ENCODE measurements at regions of chr11 and their contacts with region 1.

Region 1: GRCh38 chr11:2885676-2886081 is at the start of gene CDKN1C:
- DNase-seq: peak; percentile 90
- ATAC-seq: peak; percentile 91
- H3K4me3 ChIP-seq: peak within 1 kb of the TSS; percentile 39 to 93 (median 70)
- H3K4me3 Mint-ChIP-seq: peak within 1 kb of the TSS; percentile 95
- H3K27ac ChIP-seq: no peak within 1 kb of the TSS
- H3K27ac Mint-ChIP-seq: peak within 1 kb of the TSS; percentile 56
- H3K4me1 ChIP-seq: peaks cover 9 to 20% of the 10 kb centered on the region in 2 donors
- H3K4me1 Mint-ChIP-seq: peaks cover 16% of the 10 kb centered on the region
- H3K27me3 ChIP-seq: peaks cover 0 to 34% (median 7%) of the 10 kb centered on the region in 4 experiments
- H3K27me3 Mint-ChIP-seq: peaks cover 15% of the 10 kb centered on the region
- CTCF ChIP-seq: no peak
- total RNA-seq, gene CDKN1C: 5.9 and 8.0 TPM in 2 replicates

Region 2: DNA sequence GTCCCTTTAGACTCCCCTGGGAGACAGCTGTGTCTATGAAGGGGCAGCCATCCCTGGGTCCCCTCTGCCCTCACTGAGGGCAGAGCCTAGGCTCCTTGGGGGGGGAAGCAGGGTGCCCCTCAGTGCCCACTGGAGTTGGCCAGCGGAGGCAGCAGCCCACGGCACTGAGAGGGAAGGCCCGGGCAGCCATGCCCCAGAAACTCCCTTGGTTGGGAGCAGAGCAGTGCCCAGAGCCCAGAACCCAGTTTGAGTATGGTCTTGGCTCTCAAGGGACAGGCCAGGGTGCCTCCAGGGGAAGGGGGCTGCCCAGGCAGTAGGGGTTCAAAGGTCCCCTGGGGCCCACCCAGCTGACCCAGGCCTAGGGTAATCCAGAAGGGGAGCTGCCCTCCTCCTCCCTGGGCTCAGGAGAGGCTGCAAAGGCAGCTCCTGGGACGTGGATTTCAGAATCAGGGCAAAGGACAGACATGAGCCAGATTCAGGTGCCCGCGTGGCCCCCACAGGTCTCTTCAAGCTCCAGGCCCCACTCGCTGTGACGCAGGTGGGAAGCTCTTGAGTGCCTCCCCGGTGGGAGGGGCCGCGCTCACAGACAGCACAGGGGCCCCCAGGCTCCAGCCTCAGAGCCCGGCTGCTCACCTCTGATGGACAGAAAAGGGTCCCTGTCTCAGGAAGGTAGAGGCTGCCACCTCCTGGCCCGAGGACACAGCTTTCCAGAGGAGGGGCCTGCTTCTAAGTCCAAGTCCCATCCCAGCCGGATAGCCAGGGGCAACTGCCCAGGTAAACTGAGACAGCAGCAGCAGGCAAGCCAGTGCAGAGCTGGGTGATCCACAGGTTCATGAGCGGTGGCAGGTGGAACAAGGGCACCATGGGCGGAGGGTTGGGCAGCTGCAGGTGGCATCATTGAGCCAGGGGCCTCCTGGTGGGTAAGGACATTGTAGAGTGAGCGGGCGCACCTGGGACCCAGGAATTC is 586.6 kb before region 1 on chr11:
- CTCF ChIA-PET with region 1: interaction called, 6 read pairs
- POLR2A ChIA-PET with region 1: no interaction called
- intact Hi-C with region 1: loop called (anchors 5 kb)
- DNase-seq: peak; percentile 52
- ATAC-seq: no peak
- H3K4me3 ChIP-seq: peak overlapping the region in 2 of 5 experiments; percentile 21 to 44
- H3K4me3 Mint-ChIP-seq: peak overlapping the region; percentile 50
- H3K27ac ChIP-seq: peak overlapping the region in 1 of 2 donors; percentile 37
- H3K27ac Mint-ChIP-seq: peak overlapping the region; percentile 88
- H3K4me1 ChIP-seq: peaks cover 51 to 57% of the 10 kb centered on the region in 2 donors
- H3K4me1 Mint-ChIP-seq: peaks cover 58% of the 10 kb centered on the region
- H3K27me3 ChIP-seq: no peaks in the 10 kb centered on the region
- H3K27me3 Mint-ChIP-seq: no peaks in the 10 kb centered on the region
- CTCF ChIP-seq: no peak

Region 3: DNA sequence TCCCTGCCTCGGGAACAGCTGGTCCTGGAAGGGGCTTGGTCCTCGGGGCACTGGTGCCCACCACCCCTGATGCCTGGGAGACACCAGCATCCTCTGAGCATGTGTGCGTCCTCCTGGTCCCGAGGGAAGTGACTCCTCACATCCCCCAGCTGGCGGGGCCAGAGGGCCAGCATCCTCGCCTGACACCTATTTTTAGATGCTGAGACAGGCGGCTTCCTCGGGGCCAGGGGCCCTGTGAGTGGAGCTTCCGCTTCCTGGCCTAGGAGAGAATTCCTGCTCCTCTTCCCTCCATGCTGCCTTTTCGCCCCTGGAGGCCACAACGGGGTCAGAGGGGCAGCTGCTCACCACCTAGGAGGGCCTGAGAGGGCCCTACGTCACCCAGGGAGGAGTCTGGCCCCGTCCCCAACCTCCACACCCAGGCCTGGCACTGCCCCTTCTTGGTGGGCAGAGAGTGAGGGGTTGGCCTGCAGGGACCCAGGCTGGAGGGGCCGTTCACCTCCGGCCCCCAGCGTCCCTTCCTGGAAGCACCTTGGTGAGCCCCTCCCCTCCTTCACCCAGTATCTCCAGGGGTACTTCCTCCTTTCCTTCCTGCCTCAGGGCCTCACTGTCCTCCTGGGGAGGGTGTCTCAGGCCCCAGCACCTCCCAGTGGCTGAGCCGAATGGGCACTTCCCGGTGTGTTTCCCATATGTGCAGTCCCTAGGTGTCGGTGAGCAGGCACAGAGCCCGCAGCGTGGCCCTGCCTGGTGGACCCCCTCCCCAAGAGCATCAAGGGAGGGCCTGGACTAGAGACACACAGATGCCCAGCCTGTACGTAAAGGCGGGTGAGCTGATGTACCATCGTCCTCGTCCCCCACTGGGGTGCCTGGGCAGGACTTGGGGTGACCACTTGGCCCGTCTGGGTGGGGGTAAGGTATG is 502.5 kb before region 1 on chr11:
- CTCF ChIA-PET with region 1: no interaction called
- POLR2A ChIA-PET with region 1: no interaction called
- intact Hi-C with region 1: loop called (anchors 5 kb)
- DNase-seq: peak; percentile 65
- ATAC-seq: no peak
- H3K4me3 ChIP-seq: peak overlapping the region in 2 of 5 experiments; percentile 5 to 7
- H3K4me3 Mint-ChIP-seq: peak overlapping the region; percentile 80
- H3K27ac ChIP-seq: peak overlapping the region; percentile 83 to 86
- H3K27ac Mint-ChIP-seq: peak overlapping the region; percentile 94
- H3K4me1 ChIP-seq: peaks cover 89 to 97% of the 10 kb centered on the region in 2 donors
- H3K4me1 Mint-ChIP-seq: peaks cover 89% of the 10 kb centered on the region
- H3K27me3 ChIP-seq: no peaks in the 10 kb centered on the region
- H3K27me3 Mint-ChIP-seq: no peaks in the 10 kb centered on the region
- CTCF ChIP-seq: no peak

Region 4: DNA sequence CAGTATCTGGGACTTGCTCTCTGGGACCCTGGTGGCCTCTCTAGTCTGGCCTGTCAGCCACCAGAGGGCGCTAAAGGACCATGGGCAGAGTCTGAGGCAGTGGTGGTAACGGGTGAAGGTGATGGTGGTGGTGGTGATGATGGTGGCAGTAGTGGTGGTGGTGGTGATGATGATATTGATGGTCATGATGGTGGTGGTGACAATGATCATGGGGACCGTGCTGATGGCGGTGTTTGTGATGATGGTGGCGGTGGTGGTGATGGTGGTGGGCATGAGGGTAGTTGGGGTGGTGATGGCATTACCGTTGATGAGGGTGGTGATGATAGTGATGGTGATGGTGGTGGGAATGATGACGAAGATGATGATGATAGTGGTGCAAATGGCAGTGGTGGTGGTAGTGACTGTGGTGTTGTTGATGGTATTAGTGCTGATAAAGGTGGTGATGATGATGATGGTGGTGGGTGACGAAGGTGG is 457.3 kb before region 1 on chr11:
- CTCF ChIA-PET with region 1: interaction called, 10 read pairs
- POLR2A ChIA-PET with region 1: no interaction called
- intact Hi-C with region 1: loop called (anchors 1 kb)
- DNase-seq: peak; percentile 85
- ATAC-seq: peak; percentile 94
- H3K4me3 ChIP-seq: no peak overlapping the region
- H3K4me3 Mint-ChIP-seq: no peak overlapping the region
- H3K27ac ChIP-seq: no peak overlapping the region
- H3K27ac Mint-ChIP-seq: no peak overlapping the region
- H3K4me1 ChIP-seq: no peaks in the 10 kb centered on the region
- H3K4me1 Mint-ChIP-seq: no peaks in the 10 kb centered on the region
- H3K27me3 ChIP-seq: no peaks in the 10 kb centered on the region
- H3K27me3 Mint-ChIP-seq: no peaks in the 10 kb centered on the region
- CTCF ChIP-seq: peak; percentile 82

Region 5: DNA sequence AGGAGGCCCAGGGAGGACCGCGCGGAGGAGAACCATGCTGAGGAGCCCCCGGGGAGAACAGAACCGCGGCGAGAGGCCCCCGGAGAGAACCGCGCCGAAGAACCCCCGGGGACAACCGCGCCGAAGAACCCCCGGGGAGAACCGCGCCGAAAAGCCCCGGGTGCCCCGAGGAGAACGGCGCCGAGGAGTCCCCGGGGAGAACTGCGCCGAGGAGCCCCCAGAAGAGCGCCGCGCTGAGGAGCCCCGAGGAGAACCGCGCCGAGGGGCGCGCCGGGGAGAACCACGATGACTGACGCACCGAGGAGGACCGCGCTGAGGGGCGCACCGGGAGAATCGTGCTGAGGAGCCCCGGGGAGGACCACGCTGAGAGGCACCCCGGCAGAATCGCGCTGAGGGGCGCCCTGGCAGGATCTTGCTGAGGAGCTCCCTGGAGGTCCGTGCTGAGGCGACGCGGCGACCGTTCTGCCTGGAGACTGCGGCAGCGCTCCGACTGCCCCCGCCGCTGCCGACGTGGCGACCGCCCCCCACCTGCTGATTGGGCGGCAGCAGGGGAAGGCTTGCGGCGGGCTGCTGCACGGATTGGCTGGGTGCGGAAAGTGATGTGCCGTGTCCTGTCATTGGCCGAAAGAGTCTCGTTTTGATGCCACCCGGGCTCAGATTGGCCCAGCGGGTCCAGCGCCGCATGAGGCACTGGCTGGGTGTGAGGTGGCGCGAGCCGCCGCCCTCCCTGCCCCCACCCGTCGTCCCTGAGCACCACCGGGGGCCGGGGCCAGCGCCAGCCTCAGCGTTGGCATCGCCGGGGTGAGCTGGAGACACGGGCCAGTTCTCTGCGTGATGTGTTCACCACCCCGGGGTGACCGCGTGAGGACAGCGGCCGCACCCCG is 185.9 kb before region 1 on chr11 and contains the start of gene KCNQ1OT1:
- CTCF ChIA-PET with region 1: no interaction called
- POLR2A ChIA-PET with region 1: no interaction called
- intact Hi-C with region 1: loop called (anchors 5 kb)
- DNase-seq: peak; percentile 93
- ATAC-seq: peak; percentile 94
- H3K4me3 ChIP-seq: peak within 1 kb of the TSS; percentile 5 to 68 (median 66)
- H3K4me3 Mint-ChIP-seq: peak within 1 kb of the TSS; percentile 89
- H3K27ac ChIP-seq: peak within 1 kb of the TSS; percentile 70 to 71
- H3K27ac Mint-ChIP-seq: peak within 1 kb of the TSS; percentile 86
- H3K4me1 ChIP-seq: peaks cover 26 to 42% of the 10 kb centered on the region in 2 donors
- H3K4me1 Mint-ChIP-seq: peaks cover 46% of the 10 kb centered on the region
- H3K27me3 ChIP-seq: peaks cover 0 to 8% (median 1%) of the 10 kb centered on the region in 4 experiments
- H3K27me3 Mint-ChIP-seq: no peaks in the 10 kb centered on the region
- CTCF ChIP-seq: no peak
- total RNA-seq, gene KCNQ1OT1: 0.89 and 0.95 TPM in 2 replicates

Region 6: GRCh38 chr11:2901854-2902783 is 16.4 kb after region 1 on chr11:
- CTCF ChIA-PET with region 1: interaction called, 36 read pairs
- POLR2A ChIA-PET with region 1: no interaction called
- intact Hi-C with region 1: loop called (anchors 1 kb)
- DNase-seq: peak; percentile 88
- ATAC-seq: peak; percentile 97
- H3K4me3 ChIP-seq: peak overlapping the region; percentile 36 to 87 (median 66)
- H3K4me3 Mint-ChIP-seq: peak overlapping the region; percentile 85
- H3K27ac ChIP-seq: no peak overlapping the region
- H3K27ac Mint-ChIP-seq: peak overlapping the region; percentile 78
- H3K4me1 ChIP-seq: peaks cover 9 to 26% of the 10 kb centered on the region in 2 donors
- H3K4me1 Mint-ChIP-seq: peaks cover 20% of the 10 kb centered on the region
- H3K27me3 ChIP-seq: no peaks in the 10 kb centered on the region
- H3K27me3 Mint-ChIP-seq: peaks cover 5% of the 10 kb centered on the region
- CTCF ChIP-seq: no peak

Region 7: DNA sequence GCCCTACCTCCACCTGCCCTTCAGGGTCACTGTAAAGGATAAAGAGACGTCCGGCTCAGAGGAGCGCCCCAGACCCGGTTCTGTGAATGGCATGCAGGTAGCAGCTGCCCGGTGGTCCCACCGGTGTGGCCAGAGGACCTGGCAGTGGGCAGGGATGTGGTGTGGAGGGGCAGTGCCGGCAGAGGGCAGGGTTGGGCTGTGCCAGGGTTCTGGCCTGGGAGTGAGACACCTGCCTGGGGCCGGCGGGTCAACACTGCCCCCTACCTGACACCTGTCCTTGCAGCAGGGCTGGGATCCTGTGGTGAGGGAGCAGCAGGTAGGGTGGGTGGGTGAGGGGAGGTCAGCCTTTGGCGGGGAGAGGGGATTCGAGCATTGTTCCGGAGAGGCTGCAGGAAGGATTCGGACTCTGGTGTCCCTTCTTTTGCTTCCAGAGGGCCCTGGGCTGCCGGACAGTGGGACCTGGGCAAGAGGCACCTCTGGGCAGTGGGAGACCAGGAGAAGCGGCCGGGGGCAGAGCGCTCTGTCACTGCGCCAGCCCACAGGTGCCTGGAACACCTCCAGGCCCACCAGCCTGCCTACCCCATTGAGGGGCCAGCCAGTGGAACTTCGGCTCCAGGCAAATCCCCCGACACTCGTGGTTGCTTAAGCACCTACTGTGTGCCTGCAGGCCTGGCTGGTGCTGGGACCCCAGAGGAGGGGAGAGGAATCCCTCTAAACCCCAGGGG is 45.2 kb after region 1 on chr11:
- CTCF ChIA-PET with region 1: interaction called, 12 read pairs
- POLR2A ChIA-PET with region 1: no interaction called
- intact Hi-C with region 1: loop called (anchors 1 kb)
- DNase-seq: peak; percentile 58
- ATAC-seq: peak; percentile 53
- H3K4me3 ChIP-seq: peak overlapping the region in 4 of 5 experiments; percentile 35 to 65 (median 52)
- H3K4me3 Mint-ChIP-seq: peak overlapping the region; percentile 88
- H3K27ac ChIP-seq: no peak overlapping the region
- H3K27ac Mint-ChIP-seq: no peak overlapping the region
- H3K4me1 ChIP-seq: peaks cover 28% of the 10 kb centered on the region in 2 donors
- H3K4me1 Mint-ChIP-seq: peaks cover 16% of the 10 kb centered on the region
- H3K27me3 ChIP-seq: peaks cover 0 to 61% (median 17%) of the 10 kb centered on the region in 4 experiments
- H3K27me3 Mint-ChIP-seq: peaks cover 28% of the 10 kb centered on the region
- CTCF ChIP-seq: peak; percentile 41